ENCODE measurements at regions of chr5 and their contacts with region 1.

Region 1: GRCh38 chr5:134176511-134177368 is at the start of gene SKP1:
- DNase-seq: peak; percentile 89
- H3K4me3 ChIP-seq: peak within 1 kb of the TSS; percentile 82 to 99 (median 92)
- H3K27ac ChIP-seq: peak within 1 kb of the TSS; percentile 97 to 100 (median 98)
- H3K4me1 ChIP-seq: peaks cover 0 to 43% (median 38%) of the 10 kb centered on the region in 4 donors
- H3K27me3 ChIP-seq: no peaks in the 10 kb centered on the region
- CTCF ChIP-seq: no peak
- EP300 ChIP-seq: no peak
- POLR2A ChIP-seq: peak; percentile 95 to 98
- total RNA-seq, gene SKP1: 193 to 320 (median 271) TPM

Region 2: GRCh38 chr5:134113902-134114875 is 62.6 kb before region 1 on chr5 and contains the start of gene TCF7:
- intact Hi-C with region 1: no loop called
- DNase-seq: peak; percentile 86
- H3K4me3 ChIP-seq: peak within 1 kb of the TSS; percentile 38 to 53 (median 46)
- H3K27ac ChIP-seq: peak within 1 kb of the TSS; percentile 30 to 44 (median 40)
- H3K4me1 ChIP-seq: peaks cover 0 to 21% (median 15%) of the 10 kb centered on the region in 4 donors
- H3K27me3 ChIP-seq: peaks cover 9 to 44% (median 12%) of the 10 kb centered on the region in 3 donors
- CTCF ChIP-seq: no peak
- EP300 ChIP-seq: no peak
- POLR2A ChIP-seq: no peak
- total RNA-seq, gene TCF7: 0.36 to 1.5 (median 0.62) TPM

Region 3: DNA sequence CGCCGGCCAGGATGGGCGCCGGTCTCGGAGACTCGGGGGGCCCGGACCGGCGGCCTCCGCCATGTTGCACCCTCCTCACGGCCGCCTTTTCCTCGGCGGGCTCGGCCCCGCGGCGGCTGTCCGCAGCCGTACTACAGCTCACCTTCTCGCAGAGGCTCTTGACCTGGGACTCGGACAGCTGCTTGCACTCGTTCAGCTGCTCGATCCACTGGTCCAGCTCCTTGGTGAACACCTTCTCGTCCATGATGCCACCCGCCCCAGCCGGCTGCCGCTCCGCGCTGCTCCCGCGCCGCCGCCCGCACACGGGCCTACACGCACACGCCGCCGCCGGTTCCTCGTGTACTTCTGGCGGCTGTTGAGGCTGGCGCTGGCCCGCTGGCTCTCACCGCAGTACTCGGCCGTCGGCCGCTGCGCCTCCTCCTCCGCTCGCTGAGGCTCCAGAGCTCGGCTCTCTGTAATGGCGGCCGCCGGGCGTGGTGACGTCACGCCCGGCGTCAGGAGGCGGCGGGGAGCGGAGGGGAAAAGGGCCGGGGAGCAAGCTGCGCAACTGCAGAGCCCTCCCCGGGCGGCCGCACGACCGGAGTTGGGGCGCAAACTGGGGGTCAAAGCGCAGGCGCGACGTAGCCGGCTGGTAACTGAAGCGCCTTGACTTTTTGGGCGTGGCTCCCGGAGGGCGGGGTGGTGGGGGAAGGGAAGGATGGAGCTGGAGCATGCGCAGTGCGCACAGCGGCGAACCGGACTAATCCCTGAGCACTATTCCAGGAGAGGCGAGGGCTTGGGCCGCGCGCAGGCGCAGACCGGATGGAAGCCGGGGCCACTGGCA is 49.1 kb after region 1 on chr5 and contains the start of gene PPP2CA:
- intact Hi-C with region 1: loop called (anchors 2 kb)
- DNase-seq: peak; percentile 100
- H3K4me3 ChIP-seq: peak within 1 kb of the TSS; percentile 86 to 99 (median 94)
- H3K27ac ChIP-seq: peak within 1 kb of the TSS; percentile 99 to 100 (median 100)
- H3K4me1 ChIP-seq: peaks cover 0 to 52% (median 47%) of the 10 kb centered on the region in 4 donors
- H3K27me3 ChIP-seq: no peaks in the 10 kb centered on the region
- CTCF ChIP-seq: no peak
- EP300 ChIP-seq: peak in 1 of 4 donors; percentile 22
- POLR2A ChIP-seq: peak; percentile 88 to 92
- total RNA-seq, gene PPP2CA: 102 to 145 (median 118) TPM

Measured in sigmoid colon (tissue), 7 donors.